ENCODE measurements at regions of chr20 and their contacts with region 1.

Region 1: DNA sequence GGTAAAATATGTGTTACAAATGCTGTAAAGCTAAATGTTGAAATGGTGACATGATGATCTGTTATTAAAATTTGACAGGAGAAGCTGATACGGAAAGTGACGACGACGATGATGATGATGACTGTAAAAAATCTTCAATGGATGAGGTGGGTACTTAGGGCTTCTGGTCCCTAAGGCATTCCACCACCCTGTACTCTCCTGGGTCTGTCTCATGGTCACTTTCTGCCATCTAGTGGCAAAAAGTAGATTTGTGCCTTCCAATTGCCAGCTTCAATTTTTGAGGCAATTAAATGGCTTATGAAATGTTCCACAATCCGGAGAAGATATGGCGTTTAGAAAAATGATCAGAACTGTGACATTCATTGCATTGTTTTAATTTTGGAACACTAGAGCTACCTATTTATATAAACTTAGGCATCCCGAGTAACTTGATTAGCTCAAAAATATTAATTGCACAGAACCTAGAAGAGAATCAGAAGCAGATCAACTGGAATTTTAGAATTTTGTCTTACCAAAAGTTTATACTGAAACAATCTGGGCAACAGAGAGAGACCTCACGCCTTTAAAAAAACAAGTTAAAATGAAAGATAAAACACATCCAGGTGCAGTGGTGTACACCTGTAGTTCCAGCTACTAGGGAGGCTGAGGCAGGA is 346.5 kb upstream of the PLCB4 start:
- DNase-seq: peak; percentile 32
- H3K4me3 ChIP-seq: no peak overlapping the region
- H3K27ac ChIP-seq: no peak overlapping the region
- H3K4me1 ChIP-seq: no peaks in the 10 kb centered on the region
- H3K27me3 ChIP-seq: no peaks in the 10 kb centered on the region
- CTCF ChIP-seq: peak; percentile 60 to 80 (median 72)
- POLR2A ChIP-seq: no peak

Region 2: GRCh38 chr20:7935027-7935551 is 787.3 kb before region 1 on chr20:
- intact Hi-C with region 1: loop called (anchors 5 kb)
- DNase-seq: no peak
- H3K4me3 ChIP-seq: no peak overlapping the region
- H3K27ac ChIP-seq: no peak overlapping the region
- H3K4me1 ChIP-seq: no peaks in the 10 kb centered on the region
- H3K27me3 ChIP-seq: no peaks in the 10 kb centered on the region
- CTCF ChIP-seq: no peak
- POLR2A ChIP-seq: no peak

Region 3: GRCh38 chr20:8043687-8044282 is 678.6 kb before region 1 on chr20:
- intact Hi-C with region 1: loop called (anchors 2 kb)
- DNase-seq: peak; percentile 60
- H3K4me3 ChIP-seq: no peak overlapping the region
- H3K27ac ChIP-seq: no peak overlapping the region
- H3K4me1 ChIP-seq: no peaks in the 10 kb centered on the region
- H3K27me3 ChIP-seq: no peaks in the 10 kb centered on the region
- CTCF ChIP-seq: peak; percentile 50 to 86 (median 76)
- POLR2A ChIP-seq: no peak

Region 4: DNA sequence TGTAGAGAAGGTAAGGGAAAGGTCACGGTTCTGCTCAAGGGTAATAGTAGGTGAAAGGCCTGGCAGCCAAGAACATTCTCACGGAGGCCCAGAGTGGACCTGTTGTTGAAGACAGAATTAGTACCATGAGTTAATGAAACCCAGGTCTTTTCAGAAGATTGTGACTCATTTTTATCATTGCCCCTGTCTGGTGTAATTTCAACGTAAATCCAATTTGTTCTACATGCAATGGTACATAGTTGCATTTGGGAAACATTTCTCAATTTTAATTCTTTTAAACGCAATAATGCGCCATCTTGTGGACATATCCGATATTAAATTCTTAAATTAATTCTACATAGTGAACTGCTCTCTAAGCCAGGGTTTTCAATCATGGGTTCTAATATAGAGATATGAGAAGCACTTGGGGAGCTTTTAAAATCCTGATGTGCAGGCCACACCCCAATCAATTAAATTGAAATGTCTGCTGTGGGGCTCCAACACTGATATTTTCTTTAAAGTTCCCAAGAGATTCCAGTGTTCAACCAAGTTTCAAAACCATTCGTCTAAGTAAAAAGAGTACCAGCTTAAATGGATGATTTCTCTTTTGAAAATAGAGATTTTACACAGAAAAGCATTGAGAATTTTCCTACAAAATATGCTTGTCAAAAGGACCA is 332.9 kb before region 1 on chr20:
- intact Hi-C with region 1: loop called (anchors 10 kb)
- DNase-seq: no peak
- H3K4me3 ChIP-seq: no peak overlapping the region
- H3K27ac ChIP-seq: no peak overlapping the region
- H3K4me1 ChIP-seq: no peaks in the 10 kb centered on the region
- H3K27me3 ChIP-seq: no peaks in the 10 kb centered on the region
- CTCF ChIP-seq: peak; percentile 47 to 78 (median 68)
- POLR2A ChIP-seq: no peak

Region 5: GRCh38 chr20:8509809-8510208 is 212.6 kb before region 1 on chr20:
- intact Hi-C with region 1: no loop called
- DNase-seq: no peak
- H3K4me3 ChIP-seq: no peak overlapping the region
- H3K27ac ChIP-seq: no peak overlapping the region
- H3K4me1 ChIP-seq: no peaks in the 10 kb centered on the region
- H3K27me3 ChIP-seq: no peaks in the 10 kb centered on the region
- CTCF ChIP-seq: no peak
- POLR2A ChIP-seq: no peak

Region 6: GRCh38 chr20:8568075-8568474 is 154.3 kb before region 1 on chr20:
- intact Hi-C with region 1: no loop called
- DNase-seq: no peak
- H3K4me3 ChIP-seq: no peak overlapping the region
- H3K27ac ChIP-seq: no peak overlapping the region
- H3K4me1 ChIP-seq: no peaks in the 10 kb centered on the region
- H3K27me3 ChIP-seq: no peaks in the 10 kb centered on the region
- CTCF ChIP-seq: no peak
- POLR2A ChIP-seq: no peak

Measured in prostate gland (tissue), 2 donors.